Sciatic nerve (tissue), 2 donors: ENCODE measurements at regions of chr3 and their contacts with region 1.

Region 1: DNA sequence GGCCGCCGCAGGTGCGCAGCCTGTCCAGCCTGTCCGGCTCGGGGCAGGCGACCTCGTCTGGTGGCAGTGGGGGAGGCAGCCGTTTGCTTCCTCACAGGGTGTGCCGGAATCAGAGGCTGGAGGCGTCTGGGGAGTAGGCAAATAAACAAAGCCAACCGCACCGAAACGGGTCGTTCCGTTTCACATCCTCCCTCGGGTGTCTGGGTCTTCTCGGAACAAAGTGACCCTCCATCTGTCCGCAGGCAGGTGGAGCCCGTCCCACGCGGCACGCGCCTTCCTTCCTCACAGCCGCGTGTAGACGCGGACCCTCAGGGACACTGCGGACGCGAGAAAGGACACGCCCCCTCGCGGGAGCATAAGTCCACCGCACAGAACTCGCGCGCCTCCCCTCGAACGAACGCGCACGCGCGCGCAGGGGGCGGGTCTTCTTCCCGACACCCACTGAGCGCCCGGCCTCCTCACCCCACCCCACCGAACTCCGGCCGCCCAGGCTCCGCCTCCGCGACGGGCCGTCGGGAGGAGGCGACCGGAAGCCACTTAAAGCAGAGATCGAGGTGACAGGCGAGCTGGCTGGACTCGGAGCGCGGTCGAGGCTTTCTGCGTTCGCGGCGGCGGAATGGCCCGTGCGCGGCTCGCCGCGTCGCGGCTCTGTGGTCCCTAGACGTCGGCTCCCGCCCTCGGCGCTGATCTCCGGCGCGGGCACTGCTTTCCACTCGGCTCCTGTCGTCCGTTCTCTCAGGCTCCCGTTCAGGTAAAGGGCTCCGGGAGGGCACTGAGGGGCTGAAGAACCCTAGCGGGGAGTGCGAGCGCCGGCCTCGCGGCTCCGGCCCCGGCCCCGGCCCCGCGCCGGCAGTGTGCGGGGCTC is at the start of gene TIPARP:
- DNase-seq: peak; percentile 100
- ATAC-seq: peak; percentile 98
- total RNA-seq, gene TIPARP: 25.7 TPM

Region 2: GRCh38 chr3:156535162-156535627 is 139.1 kb before region 1 on chr3:
- intact Hi-C with region 1: loop called (anchors 10 kb)
- DNase-seq: peak; percentile 66
- ATAC-seq: peak; percentile 97

Region 3: GRCh38 chr3:156816800-156817645 is 142.7 kb after region 1 on chr3:
- intact Hi-C with region 1: loop called (anchors 2 kb)
- DNase-seq: peak; percentile 86
- ATAC-seq: peak; percentile 87

Region 4: GRCh38 chr3:157081681-157082210 is 407.5 kb after region 1 on chr3:
- intact Hi-C with region 1: loop called (anchors 10 kb)
- DNase-seq: peak; percentile 95
- ATAC-seq: peak; percentile 88

Region 5: DNA sequence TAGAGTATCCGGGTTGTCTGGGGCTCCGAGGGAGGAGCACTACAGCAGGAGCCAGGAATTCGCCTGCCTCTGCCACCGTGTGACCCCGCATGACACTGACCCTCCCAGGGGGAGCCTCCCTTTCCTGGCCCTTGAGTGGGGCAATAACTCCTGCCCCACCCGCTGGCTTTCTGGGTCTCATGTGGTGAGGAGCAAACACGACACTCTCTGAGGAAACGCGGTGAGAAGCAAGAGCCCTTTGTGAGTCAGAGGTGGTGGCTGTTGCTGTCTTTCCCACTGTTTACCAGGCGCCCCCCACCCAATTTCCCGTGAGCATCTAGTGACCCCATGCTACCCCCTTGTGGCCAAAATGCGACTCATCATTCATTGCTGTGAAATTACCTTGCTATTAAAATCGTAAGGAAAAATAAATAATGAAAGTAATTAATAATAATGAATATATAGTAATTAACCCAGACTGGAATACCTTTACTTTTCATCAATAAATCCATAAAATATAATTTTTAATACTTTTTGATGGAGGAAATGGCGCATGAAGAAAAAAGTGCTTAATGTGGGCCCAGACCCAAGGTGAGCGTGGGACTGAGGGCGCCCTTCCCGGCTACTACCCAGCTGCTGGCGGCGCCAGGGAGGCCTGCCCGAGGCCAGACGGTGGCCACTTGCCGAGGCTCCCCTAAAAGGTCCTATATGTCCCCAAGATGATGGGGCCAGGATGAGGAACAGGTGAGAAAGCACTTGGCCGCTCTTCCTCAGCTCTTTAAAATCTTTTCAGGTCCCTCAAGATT is 456.4 kb after region 1 on chr3:
- intact Hi-C with region 1: loop called (anchors 10 kb)
- DNase-seq: peak; percentile 77
- ATAC-seq: peak; percentile 55